ENCODE measurements at regions of chr2 and their contacts with region 1.

Region 1: DNA sequence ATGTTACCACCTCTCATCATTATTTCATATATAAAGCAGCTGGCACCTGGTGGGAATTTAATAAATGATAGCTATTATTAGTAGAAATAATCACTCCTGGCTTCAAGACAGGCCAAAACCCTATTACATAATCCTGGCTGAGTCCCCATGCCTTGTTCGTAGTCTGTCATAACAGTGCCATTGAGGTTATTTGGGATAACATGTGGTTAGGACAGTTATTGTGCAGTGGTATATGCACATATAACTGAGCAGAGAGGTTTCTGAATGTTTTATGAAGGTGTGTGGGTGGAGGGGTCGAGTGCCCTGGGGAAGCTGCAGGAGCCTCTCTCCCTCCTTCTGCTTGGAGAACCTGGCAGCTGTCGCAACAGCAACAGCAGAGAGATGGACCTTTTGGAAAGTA is 162.4 kb upstream of the NABP1 start:
- DNase-seq: no peak
- H3K4me3 ChIP-seq: no peak overlapping the region
- H3K27ac ChIP-seq: no peak overlapping the region
- H3K4me1 ChIP-seq: no peaks in the 10 kb centered on the region
- H3K27me3 ChIP-seq: no peaks in the 10 kb centered on the region
- CTCF ChIP-seq: no peak
- POLR2A ChIP-seq: no peak

Region 2: DNA sequence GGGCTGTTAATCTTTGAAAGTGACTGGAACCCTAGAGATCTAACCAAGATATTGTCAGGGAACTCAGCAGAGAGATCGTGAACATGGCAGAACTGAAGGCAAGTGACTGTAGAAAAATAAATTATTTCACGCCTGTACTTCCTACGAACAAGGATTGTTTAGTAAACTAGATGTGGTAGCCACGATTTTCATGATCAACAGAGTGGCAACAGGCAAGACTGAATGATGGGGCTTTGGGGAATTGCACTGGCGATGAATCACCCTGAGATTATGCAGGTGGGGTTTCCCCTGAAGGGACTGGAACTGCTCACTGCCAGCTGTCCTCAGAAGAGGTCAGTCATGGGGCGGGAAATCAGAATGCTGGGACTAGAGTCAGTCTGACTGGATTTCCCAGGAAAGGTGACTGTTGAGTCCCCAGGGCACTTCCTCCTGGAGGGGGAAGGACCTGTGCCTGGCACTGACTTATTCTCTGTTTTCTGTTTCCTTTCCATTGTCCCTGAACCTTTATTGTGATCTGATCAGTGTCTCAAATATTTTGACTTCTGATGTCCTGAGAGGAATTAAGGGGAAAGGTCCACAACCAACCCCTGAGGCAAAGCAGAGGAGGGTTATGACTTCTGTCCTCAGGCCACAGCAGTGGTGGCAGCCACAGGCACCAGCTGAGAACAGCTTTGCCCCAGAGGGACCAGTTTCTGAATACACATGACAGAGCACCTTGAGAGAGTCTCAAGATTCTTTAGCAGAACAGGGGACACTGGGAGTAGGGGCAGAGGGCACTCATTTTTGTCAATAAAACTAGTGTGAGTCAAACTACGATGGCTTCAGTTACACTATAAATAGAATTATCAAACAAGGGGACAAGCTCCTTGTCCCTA is 796.7 kb before region 1 on chr2:
- intact Hi-C with region 1: no loop called
- DNase-seq: peak; percentile 55 to 62
- H3K4me3 ChIP-seq: no peak overlapping the region
- H3K27ac ChIP-seq: peak overlapping the region; percentile 43
- H3K4me1 ChIP-seq: no peaks in the 10 kb centered on the region
- H3K27me3 ChIP-seq: no peaks in the 10 kb centered on the region
- CTCF ChIP-seq: no peak
- POLR2A ChIP-seq: no peak

Region 3: DNA sequence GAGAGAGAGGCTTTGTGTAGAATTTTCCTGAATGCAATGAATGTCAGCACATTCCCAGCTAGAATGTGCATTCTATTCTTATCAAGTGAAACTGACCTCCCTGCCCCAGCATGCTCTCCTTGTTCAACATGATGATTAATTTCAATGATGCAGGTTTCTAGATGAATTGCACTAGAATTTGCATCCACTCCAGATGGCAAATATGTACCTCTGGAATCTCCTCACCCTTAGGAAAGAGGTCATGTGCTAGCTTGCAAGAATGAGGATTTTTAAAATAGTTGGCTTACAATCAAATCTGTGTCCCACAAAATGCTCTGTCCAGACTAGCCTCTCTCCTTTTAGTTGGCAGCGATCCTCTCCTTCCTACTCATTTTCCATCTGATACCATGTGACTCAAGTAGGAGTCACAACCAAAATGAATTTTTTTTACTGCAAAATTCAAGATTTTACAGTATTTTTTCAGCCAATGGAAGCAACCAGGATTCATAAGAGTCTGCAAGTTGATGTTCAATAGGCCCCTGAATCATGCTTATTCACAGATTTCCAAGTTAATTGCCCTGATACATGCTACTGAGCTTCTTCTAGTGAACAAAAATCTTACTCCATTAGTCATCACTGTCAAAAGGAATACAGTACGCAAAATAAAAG is 343.7 kb before region 1 on chr2:
- intact Hi-C with region 1: loop called (anchors 10 kb)
- DNase-seq: peak in 1 of 2 donors; percentile 47
- H3K4me3 ChIP-seq: no peak overlapping the region
- H3K27ac ChIP-seq: peak overlapping the region; percentile 41 to 72
- H3K4me1 ChIP-seq: peaks cover 0 to 4% of the 10 kb centered on the region in 2 donors
- H3K27me3 ChIP-seq: no peaks in the 10 kb centered on the region
- CTCF ChIP-seq: no peak
- POLR2A ChIP-seq: no peak

Region 4: DNA sequence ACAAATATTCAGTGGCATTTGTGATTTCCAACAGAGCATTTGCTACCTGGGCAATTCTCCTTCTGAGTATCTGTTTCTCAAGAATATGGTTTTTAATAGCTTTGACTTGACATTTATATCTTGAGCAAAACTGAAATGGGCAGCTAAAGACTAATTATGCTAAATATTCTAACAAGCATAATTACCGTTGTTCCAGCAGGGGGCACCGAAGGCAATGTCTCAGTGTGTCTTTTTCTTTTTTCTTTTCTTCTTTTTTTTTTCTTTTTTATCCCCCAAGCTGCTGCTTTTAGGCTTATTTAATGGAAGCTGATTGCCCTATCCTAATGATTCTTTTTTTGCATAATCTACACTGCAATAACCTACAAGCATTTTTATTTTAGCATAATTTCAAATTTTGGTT is 23.5 kb after region 1 on chr2:
- intact Hi-C with region 1: no loop called
- DNase-seq: no peak
- H3K4me3 ChIP-seq: no peak overlapping the region
- H3K27ac ChIP-seq: no peak overlapping the region
- H3K4me1 ChIP-seq: no peaks in the 10 kb centered on the region
- H3K27me3 ChIP-seq: no peaks in the 10 kb centered on the region
- CTCF ChIP-seq: peak in 2 of 3 donors; percentile 13 to 33
- POLR2A ChIP-seq: no peak